Dorsolateral prefrontal cortex (tissue), 120 donors: ENCODE measurements at regions of chr7 and their contacts with region 1.

Region 1: GRCh38 chr7:73522105-73522872 is at the start of gene BAZ1B:
- DNase-seq: peak; percentile 96 to 99 (median 98)
- H3K4me3 ChIP-seq: peak within 1 kb of the TSS; percentile 67 to 99 (median 88)
- H3K27ac ChIP-seq: peak within 1 kb of the TSS; percentile 84 to 100 (median 97)
- H3K27me3 ChIP-seq: no peaks in the 10 kb centered on the region
- CTCF ChIP-seq: peak in 41 of 56 donors; percentile 8 to 66 (median 28)
- total RNA-seq, gene BAZ1B: 54.8 to 75.4 (median 63.6) TPM

Region 2: GRCh38 chr7:73557108-73557396 is 34.8 kb after region 1 on chr7:
- intact Hi-C with region 1: loop called (anchors 1 to 2 kb)
- DNase-seq: peak; percentile 82 to 96 (median 91)
- H3K4me3 ChIP-seq: peak overlapping the region; percentile 45 to 99 (median 87)
- H3K27ac ChIP-seq: peak overlapping the region; percentile 32 to 99 (median 97)
- H3K27me3 ChIP-seq: no peaks in the 10 kb centered on the region
- CTCF ChIP-seq: peak in 12 of 56 donors; percentile 9 to 36 (median 18)

Region 3: DNA sequence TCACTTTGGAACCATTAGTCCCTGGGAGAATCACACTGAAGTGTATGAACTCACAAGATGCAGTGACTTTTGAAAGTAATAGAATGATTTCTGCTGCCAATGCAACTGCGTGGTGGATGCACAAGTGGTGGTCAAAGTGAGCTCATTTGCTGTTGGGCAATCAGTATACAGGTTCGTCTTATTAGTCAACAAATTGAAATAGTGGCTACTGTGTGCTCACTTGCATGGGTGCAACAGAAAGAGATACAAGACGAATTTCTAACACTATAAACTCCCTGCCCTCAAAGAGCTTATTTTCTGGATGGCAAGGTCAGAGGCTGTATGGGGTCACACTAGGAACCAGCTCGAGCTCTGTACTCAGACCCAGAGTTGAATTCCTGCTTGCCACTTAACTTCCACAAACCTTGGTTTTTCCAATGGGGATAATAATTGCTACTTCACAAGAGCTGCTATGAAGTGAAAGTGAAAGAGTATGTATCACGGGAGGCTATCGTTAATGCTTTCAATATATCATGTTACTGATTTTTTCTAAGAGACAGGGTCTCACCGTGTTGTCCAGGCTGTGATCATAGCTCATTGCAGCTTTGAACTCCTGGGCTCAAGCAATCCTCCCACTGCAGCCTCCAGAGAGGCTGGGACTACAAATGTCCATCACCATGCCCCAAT is 43.5 kb after region 1 on chr7:
- intact Hi-C with region 1: loop called in 1 of 2 experiments (anchors 5 kb)
- DNase-seq: peak in 1 of 10 donors; percentile 4
- H3K4me3 ChIP-seq: peak overlapping the region in 10 of 59 donors; percentile 0 to 26 (median 15)
- H3K27ac ChIP-seq: no peak overlapping the region
- H3K27me3 ChIP-seq: no peaks in the 10 kb centered on the region
- CTCF ChIP-seq: no peak

Region 4: GRCh38 chr7:73578342-73579127 is 56.2 kb after region 1 on chr7 and contains the start of gene TBL2:
- intact Hi-C with region 1: loop called (anchors 2 to 5 kb)
- DNase-seq: peak; percentile 96 to 99 (median 98)
- H3K4me3 ChIP-seq: peak within 1 kb of the TSS; percentile 70 to 99 (median 90)
- H3K27ac ChIP-seq: peak within 1 kb of the TSS in 58 of 59 donors; percentile 19 to 92 (median 82)
- H3K27me3 ChIP-seq: no peaks in the 10 kb centered on the region
- CTCF ChIP-seq: peak in 41 of 56 donors; percentile 7 to 60 (median 36)
- total RNA-seq, gene TBL2: 14.3 to 32.7 (median 22.3) TPM

Region 5: GRCh38 chr7:73667344-73668102 is 145.2 kb after region 1 on chr7 and contains the start of gene VPS37D:
- intact Hi-C with region 1: loop called in 1 of 2 experiments (anchors 5 kb)
- DNase-seq: peak; percentile 72 to 93 (median 84)
- H3K4me3 ChIP-seq: peak within 1 kb of the TSS; percentile 41 to 84 (median 63)
- H3K27ac ChIP-seq: peak within 1 kb of the TSS in 8 of 59 donors; percentile 8 to 66 (median 52)
- H3K27me3 ChIP-seq: no peaks in the 10 kb centered on the region
- CTCF ChIP-seq: peak; percentile 30 to 89 (median 65)
- total RNA-seq, gene VPS37D: 5.8 to 17.7 (median 9.9) TPM

Region 6: GRCh38 chr7:73683056-73683964 is 161.0 kb after region 1 on chr7 and contains the starts of genes BUD23 and DNAJC30:
- intact Hi-C with region 1: loop called in 1 of 2 experiments (anchors 10 kb)
- DNase-seq: peak; percentile 90 to 96 (median 94)
- H3K4me3 ChIP-seq: peak within 1 kb of the TSS; percentile 67 to 100 (median 96)
- H3K27ac ChIP-seq: peak within 1 kb of the TSS in 58 of 59 donors; percentile 13 to 94 (median 80)
- H3K27me3 ChIP-seq: no peaks in the 10 kb centered on the region
- CTCF ChIP-seq: peak in 42 of 56 donors; percentile 8 to 53 (median 33)
- total RNA-seq, gene BUD23: 32.0 to 61.9 (median 46.1) TPM
- total RNA-seq, gene DNAJC30: 9.5 to 21.4 (median 15.8) TPM

Region 7: DNA sequence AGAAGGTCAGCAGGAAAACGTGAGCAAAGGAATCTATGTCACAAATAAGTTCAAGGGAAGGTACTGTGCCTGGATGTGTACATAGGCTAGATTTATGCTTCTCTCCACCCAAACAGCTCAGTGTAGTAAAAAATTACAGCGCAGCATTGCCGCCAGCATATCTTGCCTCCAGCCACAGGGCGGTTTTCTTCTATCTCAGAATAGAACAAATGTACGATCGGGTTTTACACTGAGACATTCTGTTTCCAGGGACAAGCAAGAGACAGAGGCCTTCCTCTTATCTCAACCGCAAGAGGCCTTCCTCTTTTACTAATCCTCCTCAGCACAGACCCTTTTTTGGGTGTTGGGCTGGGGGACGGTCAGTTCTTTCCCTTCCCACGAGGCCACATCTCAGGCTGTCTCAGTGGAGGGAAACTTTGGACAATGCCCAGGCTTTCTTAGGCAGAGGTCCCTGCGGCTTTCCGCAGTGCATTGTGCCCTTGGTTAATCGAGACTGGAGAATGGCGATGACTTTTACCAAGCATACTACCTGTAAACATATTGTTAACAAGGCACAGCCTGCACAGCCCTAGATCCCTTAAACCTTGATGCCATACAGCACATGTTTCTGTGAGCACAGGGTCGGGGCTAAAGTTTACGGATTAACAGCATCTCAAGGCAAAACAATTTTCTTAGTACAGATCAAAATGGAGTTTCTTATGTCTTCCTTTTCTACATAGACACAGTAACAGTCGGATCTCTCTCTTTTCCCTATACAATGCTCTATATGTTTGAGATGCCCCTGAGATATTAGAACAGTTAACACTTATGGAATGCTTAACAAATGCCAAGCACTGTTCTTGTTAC is 227.9 kb after region 1 on chr7:
- intact Hi-C with region 1: no loop called
- DNase-seq: no peak
- H3K4me3 ChIP-seq: no peak overlapping the region
- H3K27ac ChIP-seq: peak overlapping the region in 9 of 59 donors; percentile 2 to 45 (median 12)
- H3K27me3 ChIP-seq: no peaks in the 10 kb centered on the region
- CTCF ChIP-seq: no peak